Heart right ventricle (tissue), 16 donors: ENCODE measurements at regions of chr2 and their contacts with region 1.

Region 1: GRCh38 chr2:134137182-134137611 is 116.7 kb upstream of the MGAT5 start:
- DNase-seq: peak in 1 of 2 donors; percentile 47
- ATAC-seq: peak; percentile 48 to 90 (median 68)
- H3K4me3 ChIP-seq: peak overlapping the region in 8 of 10 donors; percentile 5 to 39 (median 24)
- H3K27ac ChIP-seq: peak overlapping the region in 9 of 10 donors; percentile 48 to 85 (median 80)
- H3K4me1 ChIP-seq: peaks cover 7 to 100% (median 95%) of the 10 kb centered on the region in 9 donors
- H3K27me3 ChIP-seq: no peaks in the 10 kb centered on the region
- CTCF ChIP-seq: peak in 1 of 9 donors; percentile 6

Region 2: GRCh38 chr2:134173338-134174016 is 36.3 kb after region 1 on chr2:
- intact Hi-C with region 1: loop called in 3 of 10 experiments (anchors 5 kb)
- DNase-seq: peak; percentile 50 to 67
- ATAC-seq: peak; percentile 64 to 83 (median 76)
- H3K4me3 ChIP-seq: no peak overlapping the region
- H3K27ac ChIP-seq: peak overlapping the region in 9 of 10 donors; percentile 64 to 88 (median 82)
- H3K4me1 ChIP-seq: peaks cover 12 to 86% (median 72%) of the 10 kb centered on the region in 9 donors
- H3K27me3 ChIP-seq: no peaks in the 10 kb centered on the region
- CTCF ChIP-seq: no peak

Region 3: DNA sequence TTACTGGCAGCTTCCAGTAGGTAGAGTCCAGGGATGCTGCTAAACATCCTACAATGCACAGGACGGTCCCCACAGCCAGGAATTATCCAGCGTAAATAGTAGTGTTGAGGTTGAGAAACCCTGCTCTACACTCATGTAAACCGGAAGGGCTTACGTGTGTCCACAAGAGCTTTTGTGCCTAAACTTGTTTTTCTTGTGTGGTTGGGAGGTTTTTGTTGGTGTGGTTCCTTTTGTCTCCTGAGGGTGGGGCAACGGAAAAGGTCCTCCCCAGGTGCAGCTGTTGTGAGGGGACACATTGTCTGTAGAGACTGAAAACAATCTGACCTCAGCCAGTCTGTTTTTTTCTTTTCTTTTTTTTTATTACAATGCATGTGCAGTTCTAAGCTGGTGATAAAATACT is 44.0 kb after region 1 on chr2:
- intact Hi-C with region 1: loop called in 1 of 10 experiments (anchors 10 kb)
- DNase-seq: no peak
- ATAC-seq: peak in 6 of 8 donors; percentile 13 to 68 (median 44)
- H3K4me3 ChIP-seq: no peak overlapping the region
- H3K27ac ChIP-seq: peak overlapping the region in 4 of 10 donors; percentile 15 to 39 (median 26)
- H3K4me1 ChIP-seq: peaks cover 16 to 74% (median 65%) of the 10 kb centered on the region in 9 donors
- H3K27me3 ChIP-seq: no peaks in the 10 kb centered on the region
- CTCF ChIP-seq: no peak

Region 4: GRCh38 chr2:134207564-134208209 is 70.5 kb after region 1 on chr2:
- intact Hi-C with region 1: loop called in 1 of 10 experiments (anchors 5 kb)
- DNase-seq: peak; percentile 52 to 60
- ATAC-seq: peak; percentile 63 to 86 (median 80)
- H3K4me3 ChIP-seq: no peak overlapping the region
- H3K27ac ChIP-seq: peak overlapping the region in 5 of 10 donors; percentile 3 to 63 (median 36)
- H3K4me1 ChIP-seq: peaks cover 14 to 58% (median 47%) of the 10 kb centered on the region in 9 donors
- H3K27me3 ChIP-seq: no peaks in the 10 kb centered on the region
- CTCF ChIP-seq: peak; percentile 38 to 76 (median 66)